Activated CD4-positive, alpha-beta T cell treated with anti-CD3 and anti-CD28 coated beads, Interleukin-2, amount 10 ng/mL, durations not matched to agents 24 days and 14 days (primary cell): ENCODE measurements at regions of chr11 and their contacts with region 1.

Region 1: GRCh38 chr11:14907411-14908213 is 15.6 kb upstream of the CYP2R1 start:
- DNase-seq: peak; percentile 96
- H3K4me3 Mint-ChIP-seq: no peak overlapping the region
- H3K27ac Mint-ChIP-seq: peak overlapping the region; percentile 20
- H3K4me1 Mint-ChIP-seq: peaks cover 51% of the 10 kb centered on the region
- H3K27me3 Mint-ChIP-seq: no peaks in the 10 kb centered on the region

Region 2: GRCh38 chr11:14537134-14537599 is 370.4 kb before region 1 on chr11:
- intact Hi-C with region 1: loop called (anchors 1 kb)
- DNase-seq: peak; percentile 82
- H3K4me3 Mint-ChIP-seq: peak overlapping the region; percentile 70
- H3K27ac Mint-ChIP-seq: peak overlapping the region; percentile 87
- H3K4me1 Mint-ChIP-seq: peaks cover 32% of the 10 kb centered on the region
- H3K27me3 Mint-ChIP-seq: no peaks in the 10 kb centered on the region

Region 3: DNA sequence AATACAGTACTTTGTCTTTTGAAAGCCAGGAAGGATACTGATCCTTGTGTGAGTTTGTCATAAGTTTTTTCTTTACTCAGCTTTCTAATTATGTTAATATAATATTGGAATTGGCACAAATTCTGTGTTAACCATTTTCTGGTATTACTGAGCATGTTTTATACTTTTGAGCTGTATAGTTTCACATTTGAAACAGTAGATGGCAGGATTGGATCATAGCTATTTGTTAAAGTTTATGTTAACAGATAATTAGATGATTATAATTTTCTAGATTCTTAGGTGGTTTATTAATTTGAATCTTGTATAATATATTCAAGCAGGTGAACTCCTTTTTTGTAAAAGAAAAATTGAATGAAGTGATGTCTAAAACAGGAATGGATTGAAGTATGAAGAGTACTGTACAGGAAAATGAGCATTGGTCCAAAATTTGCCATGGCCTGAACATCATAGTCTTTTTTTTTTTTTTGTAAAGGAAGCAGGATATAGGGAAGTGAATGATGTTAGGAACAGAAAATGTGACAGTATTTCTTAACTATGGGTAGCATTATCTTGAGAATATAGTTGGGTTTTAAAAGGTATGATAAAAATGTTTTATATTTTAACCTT is 117.6 kb before region 1 on chr11:
- intact Hi-C with region 1: loop called (anchors 1 kb)
- DNase-seq: no peak
- H3K4me3 Mint-ChIP-seq: no peak overlapping the region
- H3K27ac Mint-ChIP-seq: no peak overlapping the region
- H3K4me1 Mint-ChIP-seq: peaks cover 18% of the 10 kb centered on the region
- H3K27me3 Mint-ChIP-seq: no peaks in the 10 kb centered on the region

Region 4: DNA sequence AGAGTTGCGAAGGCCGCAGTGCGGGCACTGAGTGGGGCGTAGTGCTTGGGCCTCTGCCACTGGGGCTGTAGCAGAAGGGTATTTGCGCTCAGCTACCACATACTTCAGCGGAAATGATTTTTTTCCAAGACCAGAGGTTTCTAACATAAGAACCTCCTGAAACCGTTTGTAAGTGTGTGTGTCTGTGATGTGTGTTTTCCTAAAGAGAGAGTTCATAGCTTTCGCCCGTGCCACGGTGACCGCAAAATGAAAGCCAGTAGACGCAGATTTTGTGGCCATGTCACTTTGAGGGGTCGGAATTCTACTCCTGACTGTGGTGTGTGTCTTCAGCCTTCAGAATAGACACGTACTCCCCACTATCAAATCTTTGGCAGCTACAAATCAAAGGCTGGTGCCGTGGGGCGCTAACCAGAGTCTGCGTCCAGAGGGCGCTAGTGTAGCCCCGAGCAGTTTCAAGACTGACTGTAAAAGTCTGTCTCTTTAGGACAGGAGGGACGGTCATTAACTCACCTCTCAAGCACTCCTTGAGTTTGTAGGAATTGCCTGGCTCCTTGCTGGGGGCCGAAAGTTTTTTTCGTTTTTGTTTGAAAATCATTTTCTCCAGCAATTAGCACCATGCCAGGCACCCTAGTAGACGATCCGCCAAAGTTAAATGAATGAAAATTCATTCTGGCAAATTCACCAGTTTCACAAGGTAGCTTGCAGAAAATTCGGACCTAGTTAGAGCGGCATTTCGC is 67.1 kb after region 1 on chr11:
- intact Hi-C with region 1: loop called (anchors 5 kb)
- DNase-seq: peak; percentile 89
- H3K4me3 Mint-ChIP-seq: peak overlapping the region; percentile 72
- H3K27ac Mint-ChIP-seq: no peak overlapping the region
- H3K4me1 Mint-ChIP-seq: peaks cover 29% of the 10 kb centered on the region
- H3K27me3 Mint-ChIP-seq: peaks cover 83% of the 10 kb centered on the region

Region 5: GRCh38 chr11:15074206-15075161 is 166.9 kb after region 1 on chr11:
- intact Hi-C with region 1: loop called (anchors 1 kb)
- DNase-seq: peak; percentile 95
- H3K4me3 Mint-ChIP-seq: peak overlapping the region; percentile 84
- H3K27ac Mint-ChIP-seq: peak overlapping the region; percentile 59
- H3K4me1 Mint-ChIP-seq: peaks cover 16% of the 10 kb centered on the region
- H3K27me3 Mint-ChIP-seq: peaks cover 37% of the 10 kb centered on the region